ENCODE measurements at regions of chrX and their contacts with region 1.

Region 1: GRCh38 chrX:134186362-134187121 is 50.4 kb upstream of the CCDC160 start:
- DNase-seq: peak; percentile 85
- ATAC-seq: peak; percentile 87
- H3K4me3 Mint-ChIP-seq: peak overlapping the region; percentile 78
- H3K27ac Mint-ChIP-seq: peak overlapping the region; percentile 80
- H3K4me1 Mint-ChIP-seq: peaks cover 48% of the 10 kb centered on the region
- H3K27me3 Mint-ChIP-seq: no peaks in the 10 kb centered on the region

Region 2: DNA sequence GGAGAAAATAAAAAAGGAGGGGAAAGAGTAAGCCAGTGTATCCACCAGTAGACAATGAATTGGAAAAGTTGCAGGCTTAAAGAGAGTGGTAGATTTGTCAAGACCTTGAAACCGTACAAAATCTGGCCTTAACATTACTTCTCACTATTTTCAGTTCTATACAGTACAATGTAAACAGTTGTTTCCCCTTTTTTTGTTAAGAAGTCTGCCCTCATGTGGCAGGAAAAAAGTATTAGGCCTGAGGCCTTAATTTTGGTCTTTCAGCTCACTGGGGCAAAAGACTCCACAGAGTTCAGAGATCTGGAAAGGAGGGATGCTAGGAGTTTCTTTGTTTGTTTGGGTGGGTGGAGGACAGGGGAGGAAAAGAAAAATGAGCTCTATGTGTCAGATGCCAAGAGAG is 42.3 kb before region 1 on chrX:
- CTCF ChIA-PET with region 1: interaction called, 15 read pairs
- POLR2A ChIA-PET with region 1: interaction called, 3 read pairs
- DNase-seq: peak; percentile 26
- ATAC-seq: no peak
- H3K4me3 Mint-ChIP-seq: no peak overlapping the region
- H3K27ac Mint-ChIP-seq: no peak overlapping the region
- H3K4me1 Mint-ChIP-seq: peaks cover 6% of the 10 kb centered on the region
- H3K27me3 Mint-ChIP-seq: peaks cover 2% of the 10 kb centered on the region

Region 3: DNA sequence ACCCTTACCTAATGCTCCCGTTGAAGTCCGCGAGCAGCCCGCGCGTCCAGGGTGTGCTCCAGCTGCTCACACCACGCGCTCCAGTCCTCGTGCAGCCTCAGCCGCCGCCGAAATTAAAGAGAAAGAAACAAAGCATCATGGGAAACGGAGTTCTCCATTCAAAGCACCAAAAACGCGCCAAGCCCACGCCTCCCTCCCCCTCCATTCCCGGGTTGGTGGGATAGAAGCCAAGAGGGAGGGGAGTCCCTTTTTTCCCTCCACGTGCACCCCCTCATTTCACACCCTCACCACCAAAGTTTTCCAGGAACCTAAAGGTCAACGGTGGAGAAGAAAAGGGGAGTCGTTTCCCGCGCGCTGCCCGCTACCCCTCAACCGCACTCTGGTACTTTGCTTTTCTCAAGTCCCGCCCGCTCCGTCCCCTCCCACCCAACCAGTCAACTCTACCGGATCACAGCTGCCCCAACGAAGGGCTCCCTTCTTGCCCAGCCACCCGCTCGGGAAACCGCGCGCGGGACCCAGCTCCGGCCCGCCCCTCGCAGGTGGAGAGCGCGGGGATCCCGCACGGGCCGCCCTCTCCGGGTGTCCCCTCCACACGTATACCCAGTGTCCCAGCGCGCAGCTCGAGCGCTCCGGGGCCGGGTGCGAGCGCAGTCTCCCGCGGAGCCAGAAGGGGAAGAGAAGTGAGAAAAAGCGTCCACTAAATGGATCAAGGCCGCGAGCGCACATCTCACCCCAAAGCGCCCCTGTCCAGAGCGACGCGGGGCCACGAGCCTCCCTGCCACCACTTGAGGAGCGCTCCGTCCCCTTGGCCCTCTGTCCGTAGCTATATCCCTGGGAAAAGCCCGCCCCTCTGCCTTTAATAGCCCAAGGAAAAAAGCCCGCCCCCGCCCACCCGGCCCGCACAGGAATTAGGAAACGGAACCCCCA is 14.6 kb before region 1 on chrX:
- CTCF ChIA-PET with region 1: interaction called, 12 read pairs
- POLR2A ChIA-PET with region 1: interaction called, 104 read pairs
- DNase-seq: peak; percentile 67
- ATAC-seq: peak; percentile 73
- H3K4me3 Mint-ChIP-seq: peak overlapping the region; percentile 92
- H3K27ac Mint-ChIP-seq: peak overlapping the region; percentile 93
- H3K4me1 Mint-ChIP-seq: peaks cover 32% of the 10 kb centered on the region
- H3K27me3 Mint-ChIP-seq: peaks cover 3% of the 10 kb centered on the region

Region 4: DNA sequence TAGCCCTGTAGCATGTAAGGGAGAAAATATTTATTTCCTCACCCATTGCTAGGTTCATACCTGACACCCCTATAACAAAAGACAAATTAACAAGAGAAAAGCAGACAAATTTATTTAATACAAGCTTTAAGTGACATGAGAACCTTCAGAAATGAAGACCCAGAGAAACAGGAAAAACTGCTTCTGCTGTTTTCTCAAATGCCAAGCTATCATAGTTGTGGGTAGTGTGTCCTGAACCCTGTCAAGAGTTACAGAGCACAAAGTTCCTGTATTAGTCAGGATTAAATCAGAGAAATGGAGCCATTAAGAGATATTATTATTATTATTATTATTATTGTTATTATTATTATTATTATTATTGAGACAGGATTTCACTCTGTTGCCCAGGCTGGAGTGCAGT is 68.0 kb after region 1 on chrX:
- CTCF ChIA-PET with region 1: interaction called, 17 read pairs
- POLR2A ChIA-PET with region 1: no interaction called
- DNase-seq: no peak
- ATAC-seq: no peak
- H3K4me3 Mint-ChIP-seq: no peak overlapping the region
- H3K27ac Mint-ChIP-seq: no peak overlapping the region
- H3K4me1 Mint-ChIP-seq: no peaks in the 10 kb centered on the region
- H3K27me3 Mint-ChIP-seq: no peaks in the 10 kb centered on the region

Region 5: GRCh38 chrX:134548257-134549201 is 362.0 kb after region 1 on chrX:
- CTCF ChIA-PET with region 1: no interaction called
- POLR2A ChIA-PET with region 1: no interaction called
- DNase-seq: peak; percentile 33
- ATAC-seq: peak; percentile 17
- H3K4me3 Mint-ChIP-seq: peak overlapping the region; percentile 87
- H3K27ac Mint-ChIP-seq: peak overlapping the region; percentile 92
- H3K4me1 Mint-ChIP-seq: peaks cover 26% of the 10 kb centered on the region
- H3K27me3 Mint-ChIP-seq: peaks cover 21% of the 10 kb centered on the region